ENCODE measurements at regions of chr10 and their contacts with region 1.

Region 1: DNA sequence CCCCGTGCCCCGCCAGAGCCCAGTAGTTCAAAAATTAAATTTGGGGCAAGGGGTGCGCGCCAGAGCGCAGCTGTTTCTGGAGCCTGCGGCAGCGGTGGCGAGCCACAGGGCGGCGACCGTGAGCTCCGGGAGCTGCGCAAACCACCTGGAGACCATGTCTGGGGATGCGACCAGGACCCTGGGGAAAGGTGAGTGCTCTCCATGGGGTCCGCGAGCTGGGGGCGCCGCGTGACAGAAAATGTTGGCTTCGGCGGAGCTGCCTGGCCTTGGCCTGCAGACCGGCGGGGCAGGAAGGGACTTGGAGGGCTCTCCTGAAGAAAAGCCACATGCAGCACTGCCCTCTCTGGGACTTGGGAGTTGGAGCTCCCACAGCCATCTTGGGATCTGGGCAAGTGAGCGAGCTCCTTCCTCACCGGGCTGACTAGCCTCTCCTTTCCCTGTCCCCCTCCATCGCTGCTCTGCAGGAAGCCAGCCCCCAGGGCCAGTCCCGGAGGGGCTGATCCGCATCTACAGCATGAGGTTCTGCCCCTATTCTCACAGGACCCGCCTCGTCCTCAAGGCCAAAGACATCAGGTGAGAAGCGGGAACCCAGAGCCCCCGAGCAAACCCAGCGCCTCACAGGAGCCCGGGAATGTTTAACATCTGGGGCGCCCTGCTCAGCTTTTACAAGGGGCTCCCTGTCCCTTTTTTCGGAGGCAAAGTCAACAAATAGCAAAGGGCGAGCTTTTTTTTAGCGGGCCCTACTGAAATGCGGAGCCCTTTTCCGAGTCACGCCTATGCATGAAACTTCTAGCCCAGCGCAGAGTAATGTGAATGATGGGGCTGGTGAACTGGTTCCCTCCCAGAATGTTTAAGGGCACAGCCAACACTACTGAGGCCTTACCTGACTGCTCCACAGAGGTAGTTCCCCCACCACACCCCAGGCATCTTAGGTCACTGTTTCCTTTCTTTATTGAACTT is 6.1 kb downstream of the GSTO2 start:
- DNase-seq: peak; percentile 64
- ATAC-seq: peak; percentile 71
- H3K4me3 ChIP-seq: no peak overlapping the region
- H3K4me3 Mint-ChIP-seq: no peak overlapping the region
- H3K27ac ChIP-seq: no peak overlapping the region
- H3K27ac Mint-ChIP-seq: no peak overlapping the region
- H3K4me1 ChIP-seq: peaks cover 8 to 9% of the 10 kb centered on the region in 2 donors
- H3K4me1 Mint-ChIP-seq: peaks cover 4% of the 10 kb centered on the region
- H3K27me3 ChIP-seq: peaks cover 0 to 23% (median 14%) of the 10 kb centered on the region in 4 experiments
- H3K27me3 Mint-ChIP-seq: peaks cover 23% of the 10 kb centered on the region
- CTCF ChIP-seq: peak; percentile 86

Region 2: DNA sequence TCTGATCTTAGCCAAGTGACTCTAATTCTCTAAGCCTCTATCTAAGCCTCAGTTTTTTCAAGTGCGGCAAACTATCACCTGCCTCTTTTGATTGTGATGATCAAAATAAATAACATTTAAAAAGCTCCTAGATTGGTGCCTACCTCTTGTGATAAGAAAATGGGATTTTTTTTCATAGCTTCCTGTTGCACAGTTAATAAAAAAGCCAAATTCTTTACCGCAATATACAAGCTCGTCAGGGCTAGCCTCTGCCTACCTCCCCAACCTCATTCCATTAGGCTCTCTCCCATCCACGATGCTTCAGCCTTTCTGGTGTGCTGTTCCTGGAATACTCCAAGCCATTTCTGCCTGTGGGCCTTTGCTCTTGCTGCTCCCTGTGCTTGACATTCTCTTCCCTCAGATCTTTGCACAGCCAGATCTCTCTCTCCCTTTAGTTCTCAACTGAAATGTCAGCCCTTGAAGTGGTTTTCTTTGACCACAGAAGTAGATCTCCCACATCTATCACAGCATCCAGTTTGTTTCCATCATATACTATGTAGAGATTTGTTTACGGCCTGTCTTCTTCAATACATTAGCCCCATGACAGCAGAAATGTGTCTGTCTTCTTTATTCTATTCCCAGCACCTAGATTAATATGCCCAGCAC is 104.3 kb before region 1 on chr10:
- CTCF ChIA-PET with region 1: no interaction called
- POLR2A ChIA-PET with region 1: no interaction called
- intact Hi-C with region 1: no loop called
- DNase-seq: no peak
- ATAC-seq: no peak
- H3K4me3 ChIP-seq: no peak overlapping the region
- H3K4me3 Mint-ChIP-seq: no peak overlapping the region
- H3K27ac ChIP-seq: no peak overlapping the region
- H3K27ac Mint-ChIP-seq: no peak overlapping the region
- H3K4me1 ChIP-seq: no peaks in the 10 kb centered on the region
- H3K4me1 Mint-ChIP-seq: no peaks in the 10 kb centered on the region
- H3K27me3 ChIP-seq: peaks cover 0 to 13% (median 5%) of the 10 kb centered on the region in 4 experiments
- H3K27me3 Mint-ChIP-seq: peaks cover 43% of the 10 kb centered on the region
- CTCF ChIP-seq: no peak

Region 3: DNA sequence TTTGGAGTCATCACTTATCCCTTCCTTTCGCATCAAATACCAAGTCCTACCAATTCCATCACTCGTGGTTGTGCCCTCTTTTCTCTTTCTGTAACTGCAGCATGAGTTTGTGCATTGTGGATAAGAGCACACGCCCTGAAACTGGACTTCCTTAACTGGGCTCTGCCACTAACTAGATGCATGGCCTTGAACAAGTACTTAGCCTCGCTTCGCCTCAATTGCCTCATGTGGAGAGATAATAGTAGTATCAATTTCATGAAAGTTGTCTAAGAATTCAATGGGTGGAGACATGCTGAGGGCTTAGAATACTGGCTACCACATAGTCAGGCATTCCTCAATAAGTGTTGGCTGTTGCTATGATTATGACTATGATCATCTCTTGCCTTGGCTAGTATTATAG is 84.3 kb before region 1 on chr10:
- CTCF ChIA-PET with region 1: no interaction called
- POLR2A ChIA-PET with region 1: no interaction called
- intact Hi-C with region 1: no loop called
- DNase-seq: no peak
- ATAC-seq: no peak
- H3K4me3 ChIP-seq: no peak overlapping the region
- H3K4me3 Mint-ChIP-seq: no peak overlapping the region
- H3K27ac ChIP-seq: no peak overlapping the region
- H3K27ac Mint-ChIP-seq: no peak overlapping the region
- H3K4me1 ChIP-seq: no peaks in the 10 kb centered on the region
- H3K4me1 Mint-ChIP-seq: no peaks in the 10 kb centered on the region
- H3K27me3 ChIP-seq: peaks cover 0 to 6% (median 0%) of the 10 kb centered on the region in 4 experiments
- H3K27me3 Mint-ChIP-seq: peaks cover 41% of the 10 kb centered on the region
- CTCF ChIP-seq: no peak

Region 4: GRCh38 chr10:104254493-104255310 is 20.3 kb before region 1 on chr10 and contains the start of gene GSTO1:
- CTCF ChIA-PET with region 1: interaction called, 39 read pairs
- POLR2A ChIA-PET with region 1: interaction called, 3 read pairs
- intact Hi-C with region 1: no loop called
- DNase-seq: peak; percentile 68
- ATAC-seq: peak; percentile 87
- H3K4me3 ChIP-seq: peak within 1 kb of the TSS; percentile 87 to 95 (median 92)
- H3K4me3 Mint-ChIP-seq: peak within 1 kb of the TSS; percentile 99
- H3K27ac ChIP-seq: peak within 1 kb of the TSS; percentile 65 to 82
- H3K27ac Mint-ChIP-seq: peak within 1 kb of the TSS; percentile 97
- H3K4me1 ChIP-seq: peaks cover 13 to 14% of the 10 kb centered on the region in 2 donors
- H3K4me1 Mint-ChIP-seq: peaks cover 48% of the 10 kb centered on the region
- H3K27me3 ChIP-seq: peaks cover 0 to 4% (median 0%) of the 10 kb centered on the region in 4 experiments
- H3K27me3 Mint-ChIP-seq: peaks cover 13% of the 10 kb centered on the region
- CTCF ChIP-seq: no peak
- total RNA-seq, gene GSTO1: 36.4 and 37.7 TPM in 2 replicates

Region 5: DNA sequence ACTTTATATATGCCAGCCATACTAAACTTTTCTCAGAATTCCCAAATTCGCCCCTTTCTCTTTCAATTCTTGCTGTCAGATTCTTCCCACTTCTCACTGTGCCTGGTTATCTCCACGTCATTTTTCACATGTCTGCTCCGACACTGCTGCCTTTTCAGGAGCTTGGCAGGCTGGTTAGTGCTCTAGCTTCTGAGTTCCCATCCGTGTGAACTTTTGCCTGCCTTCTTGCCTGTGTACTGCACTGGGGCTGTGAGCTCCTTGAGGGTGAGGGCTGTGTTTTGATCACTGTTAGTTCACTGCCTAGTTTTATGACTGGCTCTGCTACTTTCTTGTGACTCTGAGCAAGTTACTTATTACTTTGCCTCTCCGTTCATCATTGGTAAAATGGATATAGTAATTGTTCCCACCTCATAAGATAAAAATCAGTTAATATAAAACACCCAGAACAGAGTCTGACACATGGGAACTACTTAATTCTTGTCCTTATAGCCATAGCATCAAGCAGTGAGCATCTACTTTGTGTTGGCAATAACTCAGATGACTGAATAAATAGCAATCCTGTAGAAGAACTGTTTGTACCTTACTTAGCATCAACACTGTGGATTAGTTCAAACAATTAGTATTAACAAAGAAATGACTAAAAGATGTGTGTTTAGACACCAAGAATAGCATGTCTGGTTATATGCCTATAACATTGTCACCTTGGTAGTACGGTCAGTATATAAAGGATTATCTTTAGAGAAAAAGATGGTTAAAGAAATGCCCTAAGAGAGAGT is 14.9 kb before region 1 on chr10:
- CTCF ChIA-PET with region 1: interaction called, 39 read pairs
- POLR2A ChIA-PET with region 1: interaction called, 3 read pairs
- intact Hi-C with region 1: no loop called
- DNase-seq: no peak
- ATAC-seq: no peak
- H3K4me3 ChIP-seq: no peak overlapping the region
- H3K4me3 Mint-ChIP-seq: no peak overlapping the region
- H3K27ac ChIP-seq: peak overlapping the region in 1 of 2 donors; percentile 17
- H3K27ac Mint-ChIP-seq: peak overlapping the region; percentile 43
- H3K4me1 ChIP-seq: peaks cover 5 to 9% of the 10 kb centered on the region in 2 donors
- H3K4me1 Mint-ChIP-seq: peaks cover 63% of the 10 kb centered on the region
- H3K27me3 ChIP-seq: no peaks in the 10 kb centered on the region
- H3K27me3 Mint-ChIP-seq: no peaks in the 10 kb centered on the region
- CTCF ChIP-seq: no peak

Region 6: DNA sequence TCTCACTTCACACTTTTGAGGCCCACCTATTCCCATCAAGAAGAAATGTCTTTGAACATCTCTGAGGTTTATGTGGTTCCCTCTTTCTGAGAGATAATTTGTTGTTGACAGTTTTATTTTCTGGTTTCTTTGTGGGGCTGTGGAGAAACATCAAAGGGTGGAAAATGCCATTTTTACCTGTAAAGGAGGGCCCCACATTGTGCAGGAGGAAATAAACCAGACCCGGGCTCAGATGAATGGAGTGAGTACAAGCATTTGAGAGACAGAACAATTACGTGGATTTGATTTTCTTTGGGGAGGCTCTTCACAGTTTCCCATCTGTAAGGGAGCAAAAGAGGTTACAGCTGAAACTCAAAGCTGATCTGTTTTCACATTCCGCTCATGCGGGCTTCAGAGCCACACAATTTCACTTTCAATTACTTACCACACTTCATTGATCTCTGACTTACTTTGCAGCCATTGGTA is 33.4 kb after region 1 on chr10:
- CTCF ChIA-PET with region 1: interaction called, 18 read pairs
- POLR2A ChIA-PET with region 1: no interaction called
- intact Hi-C with region 1: no loop called
- DNase-seq: no peak
- ATAC-seq: no peak
- H3K4me3 ChIP-seq: no peak overlapping the region
- H3K4me3 Mint-ChIP-seq: no peak overlapping the region
- H3K27ac ChIP-seq: peak overlapping the region in 1 of 2 donors; percentile 49
- H3K27ac Mint-ChIP-seq: peak overlapping the region; percentile 76
- H3K4me1 ChIP-seq: peaks cover 13 to 21% of the 10 kb centered on the region in 2 donors
- H3K4me1 Mint-ChIP-seq: peaks cover 23% of the 10 kb centered on the region
- H3K27me3 ChIP-seq: no peaks in the 10 kb centered on the region
- H3K27me3 Mint-ChIP-seq: no peaks in the 10 kb centered on the region
- CTCF ChIP-seq: no peak